OCI-LY7 (cell line): ENCODE measurements at regions of chr14 and their contacts with region 1.

Region 1: GRCh38 chr14:59964251-59965007 is 44.5 kb downstream of the LRRC9 start:
- DNase-seq: peak; percentile 15
- H3K4me3 ChIP-seq: peak overlapping the region; percentile 56
- H3K27ac ChIP-seq: peak overlapping the region; percentile 73
- H3K4me1 ChIP-seq: peaks cover 14% of the 10 kb centered on the region
- CTCF ChIP-seq: no peak

Region 2: DNA sequence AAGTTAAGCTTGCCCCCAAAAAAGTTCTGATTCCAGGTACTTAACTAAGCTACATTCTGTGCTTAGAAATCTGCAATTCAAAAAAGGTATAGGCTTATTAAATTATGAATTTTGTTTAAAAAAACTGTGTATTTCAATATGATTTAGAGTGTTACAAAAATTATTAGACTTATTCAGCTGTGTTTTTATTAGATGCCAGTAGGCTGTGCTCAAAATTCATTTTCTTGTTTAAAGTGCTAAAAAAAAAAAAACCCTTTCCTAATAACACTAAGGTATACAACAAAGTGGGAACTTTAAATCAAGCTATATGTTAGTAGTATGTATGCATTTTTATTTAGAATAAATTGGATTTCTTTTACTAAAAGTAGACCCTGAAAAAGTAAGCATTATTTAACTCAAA is 19.5 kb before region 1 on chr14:
- CTCF ChIA-PET with region 1: interaction called, 3 read pairs
- POLR2A ChIA-PET with region 1: interaction called, 10 read pairs
- intact Hi-C with region 1: no loop called
- DNase-seq: no peak
- H3K4me3 ChIP-seq: no peak overlapping the region
- H3K27ac ChIP-seq: no peak overlapping the region
- H3K4me1 ChIP-seq: no peaks in the 10 kb centered on the region
- CTCF ChIP-seq: 0 out of 2 replicates have a peak, but pooled peaks have one; percentile 24

Region 3: GRCh38 chr14:60064491-60065072 is 100.2 kb after region 1 on chr14:
- CTCF ChIA-PET with region 1: no interaction called
- POLR2A ChIA-PET with region 1: interaction called, 12 read pairs
- intact Hi-C with region 1: loop called (anchors 5 kb)
- DNase-seq: peak; percentile 59
- H3K4me3 ChIP-seq: no peak overlapping the region
- H3K27ac ChIP-seq: no peak overlapping the region
- H3K4me1 ChIP-seq: no peaks in the 10 kb centered on the region
- CTCF ChIP-seq: peak; percentile 91

Region 4: DNA sequence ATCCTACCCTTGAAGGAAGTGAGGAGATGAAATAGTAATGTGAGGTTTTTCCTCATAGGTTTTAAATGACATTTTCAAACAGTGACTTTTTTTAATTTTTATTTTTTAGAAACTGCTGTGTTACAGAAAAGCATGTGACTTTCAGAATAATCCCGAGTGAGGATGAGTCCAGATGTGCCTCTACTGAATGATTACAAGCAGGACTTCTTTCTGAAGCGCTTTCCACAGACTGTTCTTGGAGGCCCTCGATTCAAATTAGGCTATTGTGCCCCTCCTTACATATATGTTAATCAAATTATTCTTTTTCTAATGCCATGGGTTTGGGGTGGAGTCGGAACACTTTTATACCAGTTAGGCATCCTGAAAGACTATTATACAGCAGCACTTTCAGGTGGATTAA is 143.0 kb after region 1 on chr14:
- CTCF ChIA-PET with region 1: no interaction called
- POLR2A ChIA-PET with region 1: no interaction called
- intact Hi-C with region 1: no loop called
- DNase-seq: no peak
- H3K4me3 ChIP-seq: no peak overlapping the region
- H3K27ac ChIP-seq: no peak overlapping the region
- H3K4me1 ChIP-seq: no peaks in the 10 kb centered on the region
- CTCF ChIP-seq: no peak

Region 5: GRCh38 chr14:60164712-60165546 is 200.5 kb after region 1 on chr14 and contains the start of gene DHRS7:
- CTCF ChIA-PET with region 1: interaction called, 6 read pairs
- POLR2A ChIA-PET with region 1: interaction called, 28 read pairs
- intact Hi-C with region 1: loop called (anchors 1 kb)
- DNase-seq: peak; percentile 88
- H3K4me3 ChIP-seq: peak within 1 kb of the TSS; percentile 70
- H3K27ac ChIP-seq: peak within 1 kb of the TSS; percentile 69
- H3K4me1 ChIP-seq: peaks cover 28% of the 10 kb centered on the region
- CTCF ChIP-seq: peak; percentile 63
- total RNA-seq, gene DHRS7: 30.9 and 32.7 TPM in 2 replicates

Region 6: DNA sequence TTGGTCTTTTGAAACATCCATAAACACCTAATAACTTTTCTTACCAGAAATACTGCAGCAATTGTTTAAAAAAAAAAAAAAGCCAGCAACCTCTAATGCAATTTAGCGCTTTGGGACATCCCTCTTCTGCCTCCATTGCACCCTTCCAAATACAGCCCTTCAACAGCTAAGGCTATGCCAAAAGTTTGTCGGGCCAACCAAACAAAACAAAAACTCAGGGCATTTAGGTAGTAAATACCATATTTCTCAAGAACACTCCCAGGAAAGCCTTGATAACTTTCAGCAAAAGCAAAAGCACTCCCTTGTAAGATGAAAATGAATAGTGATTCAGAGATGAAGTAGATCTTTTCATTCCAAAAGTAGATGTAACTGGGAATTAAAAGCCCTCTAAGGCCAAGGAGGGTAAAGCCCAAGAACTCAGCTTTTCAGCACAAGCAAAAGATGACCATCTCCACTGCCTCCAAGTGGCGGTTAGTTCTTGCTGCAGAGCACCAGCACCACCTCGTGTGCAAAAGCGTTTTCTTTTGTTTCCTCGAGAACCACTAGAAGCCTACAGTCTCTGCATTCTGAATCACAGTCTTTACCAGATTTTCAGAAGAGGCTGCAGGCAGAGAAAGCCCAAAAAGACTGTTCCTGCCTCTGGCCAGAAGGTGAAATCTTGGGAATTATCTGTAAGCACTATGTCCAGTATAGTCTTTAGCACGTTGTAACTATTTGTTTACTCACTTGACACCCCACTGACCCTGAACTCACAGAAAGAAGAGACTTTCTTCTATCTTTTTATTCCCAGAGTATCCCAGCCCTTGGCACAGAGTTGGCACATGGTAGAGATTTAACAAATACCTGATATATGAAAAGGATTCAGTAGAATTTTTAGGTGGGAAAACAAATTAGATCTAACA is 597.7 kb after region 1 on chr14:
- CTCF ChIA-PET with region 1: no interaction called
- POLR2A ChIA-PET with region 1: interaction called, 3 read pairs
- intact Hi-C with region 1: loop called (anchors 2 kb)
- DNase-seq: peak; percentile 90
- H3K4me3 ChIP-seq: no peak overlapping the region
- H3K27ac ChIP-seq: no peak overlapping the region
- H3K4me1 ChIP-seq: peaks cover 78% of the 10 kb centered on the region
- CTCF ChIP-seq: peak; percentile 97